SK-N-SH (cell line): ENCODE measurements at regions of chr17 and their contacts with region 1.

Region 1: GRCh38 chr17:82876602-82877379 is 37.0 kb upstream of the ZNF750 start:
- DNase-seq: peak; percentile 88
- H3K4me3 ChIP-seq: no peak overlapping the region
- H3K27ac ChIP-seq: no peak overlapping the region
- H3K4me1 ChIP-seq: peaks cover 0 to 17% of the 10 kb centered on the region in 2 experiments; a peak in 1 of 4 replicates
- H3K27me3 ChIP-seq: no peaks in the 10 kb centered on the region
- CTCF ChIP-seq: peak; percentile 49
- EP300 ChIP-seq: no peak
- RAD21 ChIP-seq: peak; percentile 67

Region 2: DNA sequence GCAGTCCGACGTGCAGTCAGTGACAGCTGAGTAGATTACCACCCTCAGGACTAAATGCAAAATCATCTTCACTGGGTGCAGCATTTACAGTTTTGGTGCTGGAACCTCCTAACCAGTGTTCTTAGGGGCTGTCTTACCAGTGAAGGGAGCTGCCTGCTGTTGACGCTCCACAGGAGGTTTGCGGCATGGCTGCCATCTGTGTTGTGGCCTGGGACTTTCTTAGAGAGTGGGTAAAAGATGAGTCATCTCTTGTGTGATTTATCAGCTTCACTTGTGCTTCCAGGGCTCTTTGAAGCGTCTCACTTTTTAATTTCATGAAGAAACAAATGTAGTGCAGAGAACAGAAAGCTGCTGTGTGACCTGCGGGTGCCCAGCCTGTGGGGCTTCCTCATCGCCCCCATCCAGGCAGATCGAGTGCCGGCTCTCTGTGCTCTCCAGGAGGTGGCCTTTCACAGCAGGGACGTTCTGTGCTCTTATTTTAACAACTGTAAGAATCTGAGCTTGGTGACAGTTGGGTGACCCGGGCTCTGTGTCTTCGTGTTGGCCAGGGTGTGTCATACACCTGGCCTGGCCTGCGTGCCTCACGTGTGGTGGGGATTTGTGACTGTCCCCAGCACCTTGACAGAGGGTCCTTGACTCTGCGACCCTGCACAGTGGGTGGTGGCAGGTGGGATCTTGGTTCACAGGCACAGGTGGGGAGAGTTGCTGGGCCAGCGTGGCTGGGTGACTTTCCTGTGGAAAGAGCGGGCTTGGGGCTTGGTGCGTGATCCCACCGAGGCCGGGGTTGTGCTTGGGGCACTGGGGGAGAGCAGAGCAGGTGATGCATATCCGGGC is 12.6 kb before region 1 on chr17:
- CTCF ChIA-PET with region 1: interaction called, 15 read pairs
- POLR2A ChIA-PET with region 1: interaction called, 3 read pairs
- DNase-seq: peak; percentile 70
- H3K4me3 ChIP-seq: no peak overlapping the region
- H3K27ac ChIP-seq: peak overlapping the region; percentile 65 to 92
- H3K4me1 ChIP-seq: peaks cover 41 to 67% of the 10 kb centered on the region in 2 experiments
- H3K27me3 ChIP-seq: no peaks in the 10 kb centered on the region
- CTCF ChIP-seq: no peak
- EP300 ChIP-seq: no peak
- RAD21 ChIP-seq: no peak

Region 3: GRCh38 chr17:82892899-82893565 is 16.2 kb after region 1 on chr17:
- CTCF ChIA-PET with region 1: interaction called, 14 read pairs
- POLR2A ChIA-PET with region 1: no interaction called
- DNase-seq: no peak
- H3K4me3 ChIP-seq: no peak overlapping the region
- H3K27ac ChIP-seq: no peak overlapping the region; a peak in 1 of 4 replicates
- H3K4me1 ChIP-seq: peaks cover 0 to 19% of the 10 kb centered on the region in 2 experiments; a peak in 1 of 4 replicates
- H3K27me3 ChIP-seq: no peaks in the 10 kb centered on the region
- CTCF ChIP-seq: no peak
- EP300 ChIP-seq: no peak
- RAD21 ChIP-seq: no peak

Region 4: DNA sequence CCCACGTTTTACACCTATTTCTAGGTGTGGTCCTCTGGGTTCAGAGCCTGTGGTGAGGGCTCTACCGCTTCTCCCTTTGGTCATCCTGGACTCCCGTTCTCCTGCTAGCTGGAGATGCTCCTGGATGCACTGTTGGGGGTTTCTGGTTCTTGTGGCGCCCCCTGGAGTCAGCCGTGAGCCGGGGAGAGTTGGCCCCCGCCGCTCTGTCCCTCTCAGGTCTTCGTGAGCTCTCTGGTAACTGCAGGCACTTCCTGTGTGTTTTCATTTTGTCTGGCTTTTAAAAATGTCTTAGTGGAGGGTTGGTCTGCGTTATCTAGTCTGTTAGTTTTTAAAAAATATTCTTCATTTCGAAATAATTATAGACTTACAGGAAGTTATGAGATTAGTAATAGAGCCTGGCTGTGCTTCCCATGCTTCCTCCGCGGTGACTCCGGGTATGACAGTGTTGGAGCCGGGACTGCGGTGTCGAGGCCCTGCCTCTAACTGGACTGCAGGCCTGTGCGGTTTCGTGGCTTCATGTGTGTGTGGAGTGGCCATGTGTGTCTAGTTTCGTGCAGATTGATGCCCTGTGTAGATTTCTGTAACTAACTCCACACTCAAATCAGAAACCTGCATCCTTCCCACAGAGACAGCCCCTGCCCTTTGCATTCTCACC is 41.0 kb after region 1 on chr17:
- CTCF ChIA-PET with region 1: interaction called, 12 read pairs
- POLR2A ChIA-PET with region 1: no interaction called
- DNase-seq: peak; percentile 83
- H3K4me3 ChIP-seq: no peak overlapping the region
- H3K27ac ChIP-seq: no peak overlapping the region; a peak in 1 of 4 replicates
- H3K4me1 ChIP-seq: no peaks in the 10 kb centered on the region
- H3K27me3 ChIP-seq: no peaks in the 10 kb centered on the region
- CTCF ChIP-seq: peak; percentile 58
- EP300 ChIP-seq: no peak
- RAD21 ChIP-seq: peak; percentile 56

Region 5: GRCh38 chr17:82956726-82957463 is 80.1 kb after region 1 on chr17:
- CTCF ChIA-PET with region 1: no interaction called
- POLR2A ChIA-PET with region 1: no interaction called
- DNase-seq: no peak
- H3K4me3 ChIP-seq: no peak overlapping the region
- H3K27ac ChIP-seq: no peak overlapping the region
- H3K4me1 ChIP-seq: no peaks in the 10 kb centered on the region
- H3K27me3 ChIP-seq: no peaks in the 10 kb centered on the region
- CTCF ChIP-seq: no peak
- EP300 ChIP-seq: no peak
- RAD21 ChIP-seq: no peak